RWPE1 (cell line): ENCODE measurements at regions of chr1 and their contacts with region 1.

Region 1: GRCh38 chr1:205321164-205321958 is at the start of gene NUAK2:
- DNase-seq: peak; percentile 96
- H3K27ac ChIP-seq: peak within 1 kb of the TSS; percentile 98
- CTCF ChIP-seq: peak; percentile 33

Region 2: DNA sequence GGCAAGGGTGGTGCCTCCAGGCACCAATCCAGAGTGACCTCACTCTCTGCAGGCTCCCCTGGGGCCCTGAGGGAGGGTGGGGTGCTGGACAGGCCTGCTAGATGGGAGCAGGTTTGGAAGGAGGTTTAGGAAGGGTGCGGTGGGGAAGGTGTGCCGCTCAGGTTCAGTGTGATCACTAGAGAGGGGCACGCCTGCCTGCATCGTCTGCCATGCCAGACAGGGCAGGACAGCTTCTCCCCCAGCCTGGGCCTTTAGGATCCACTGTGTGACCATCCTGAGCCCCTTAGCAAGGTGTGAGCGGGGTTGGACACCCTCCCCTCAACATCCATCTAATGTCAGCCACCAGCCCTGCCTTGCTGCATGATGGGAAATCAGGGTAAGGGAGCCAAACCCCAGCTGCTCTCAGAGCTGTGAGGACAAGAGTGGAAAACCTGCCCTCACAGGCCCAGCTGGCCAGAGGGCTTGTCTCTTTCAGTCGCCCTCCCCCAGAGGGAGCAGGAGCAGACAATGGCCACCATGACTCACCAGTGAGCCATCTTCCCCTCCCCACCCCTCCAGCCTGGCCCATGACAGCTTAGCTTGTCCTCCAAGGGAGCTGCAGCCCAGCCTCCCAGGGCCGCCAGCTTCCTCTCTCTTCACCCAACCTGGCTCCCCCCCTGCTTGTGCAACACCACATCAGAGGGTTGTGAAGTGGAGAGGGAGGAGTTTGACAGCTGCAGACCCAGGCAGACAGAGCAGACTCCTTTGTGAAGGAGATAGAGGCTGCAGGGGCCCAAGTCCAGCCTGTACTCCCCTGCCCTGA is 36.8 kb before region 1 on chr1:
- CTCF ChIA-PET with region 1: interaction called, 11 read pairs
- POLR2A ChIA-PET with region 1: interaction called, 4 read pairs
- DNase-seq: peak; percentile 100
- H3K27ac ChIP-seq: peak overlapping the region; percentile 97
- CTCF ChIP-seq: no peak